AG04450 (cell line): ENCODE measurements at regions of chr5 and their contacts with region 1.

Region 1: DNA sequence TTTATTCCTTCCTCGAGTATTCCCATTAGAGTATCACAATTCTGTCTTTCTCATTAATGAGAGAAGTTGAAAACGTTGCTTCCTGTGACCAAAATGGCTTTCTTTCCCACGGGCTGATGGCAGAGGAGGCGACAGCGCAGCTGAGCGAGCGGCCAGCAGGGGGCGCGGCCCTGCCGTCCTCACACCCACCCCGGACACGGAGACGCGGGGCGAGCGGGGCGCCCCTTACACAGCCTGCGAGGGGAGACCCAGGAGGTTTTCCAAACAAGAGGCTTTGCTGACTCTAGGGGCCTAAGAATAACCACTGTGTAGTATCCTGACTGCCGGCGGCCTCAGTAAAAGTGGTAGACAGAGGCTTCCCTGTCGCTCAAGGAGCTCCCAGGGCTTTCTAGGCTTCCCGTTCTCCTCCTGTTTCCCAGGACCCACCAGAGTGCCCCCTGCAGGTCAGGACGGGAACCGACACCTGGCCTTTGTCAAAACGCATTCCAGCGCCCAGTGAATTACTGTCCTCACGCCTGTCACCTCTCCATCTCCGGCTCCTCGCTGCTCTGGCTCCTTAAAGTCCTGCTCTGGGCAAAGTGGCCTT is 27.3 kb upstream of the FGF1 start:
- DNase-seq: peak; percentile 54
- H3K4me3 ChIP-seq: peak overlapping the region; percentile 72
- H3K27ac ChIP-seq: no peak overlapping the region
- H3K27me3 ChIP-seq: peaks cover 2% of the 10 kb centered on the region
- CTCF ChIP-seq: peak; percentile 79

Region 2: GRCh38 chr5:141691867-141692532 is 1021.2 kb before region 1 on chr5:
- CTCF ChIA-PET with region 1: no interaction called
- POLR2A ChIA-PET with region 1: no interaction called
- DNase-seq: peak; percentile 38
- H3K4me3 ChIP-seq: peak overlapping the region; percentile 59
- H3K27ac ChIP-seq: no peak overlapping the region
- H3K27me3 ChIP-seq: peaks cover 38% of the 10 kb centered on the region
- CTCF ChIP-seq: peak; percentile 97

Region 3: GRCh38 chr5:142644640-142645361 is 68.4 kb before region 1 on chr5:
- CTCF ChIA-PET with region 1: interaction called, 22 read pairs
- POLR2A ChIA-PET with region 1: no interaction called
- DNase-seq: peak; percentile 96
- H3K4me3 ChIP-seq: peak overlapping the region; percentile 49
- H3K27ac ChIP-seq: peak overlapping the region; percentile 97
- H3K27me3 ChIP-seq: no peaks in the 10 kb centered on the region
- CTCF ChIP-seq: no peak

Region 4: GRCh38 chr5:142685418-142686209 is 27.6 kb before region 1 on chr5 and contains the start of gene FGF1:
- CTCF ChIA-PET with region 1: interaction called, 20 read pairs
- POLR2A ChIA-PET with region 1: no interaction called
- DNase-seq: no peak
- H3K4me3 ChIP-seq: no peak within 1 kb of the TSS
- H3K27ac ChIP-seq: no peak within 1 kb of the TSS
- H3K27me3 ChIP-seq: no peaks in the 10 kb centered on the region
- CTCF ChIP-seq: no peak
- polyA plus RNA-seq, gene FGF1: 5.9 and 6.3 TPM in 2 replicates

Region 5: GRCh38 chr5:142769741-142770631 is 56.8 kb after region 1 on chr5 and contains the start of gene ARHGAP26:
- CTCF ChIA-PET with region 1: interaction called, 20 read pairs
- POLR2A ChIA-PET with region 1: no interaction called
- DNase-seq: peak; percentile 77
- H3K4me3 ChIP-seq: peak within 1 kb of the TSS; percentile 92
- H3K27ac ChIP-seq: no peak within 1 kb of the TSS
- H3K27me3 ChIP-seq: peaks cover 38% of the 10 kb centered on the region
- CTCF ChIP-seq: peak; percentile 34
- polyA plus RNA-seq, gene ARHGAP26: 0.56 and 0.77 TPM in 2 replicates

Region 6: DNA sequence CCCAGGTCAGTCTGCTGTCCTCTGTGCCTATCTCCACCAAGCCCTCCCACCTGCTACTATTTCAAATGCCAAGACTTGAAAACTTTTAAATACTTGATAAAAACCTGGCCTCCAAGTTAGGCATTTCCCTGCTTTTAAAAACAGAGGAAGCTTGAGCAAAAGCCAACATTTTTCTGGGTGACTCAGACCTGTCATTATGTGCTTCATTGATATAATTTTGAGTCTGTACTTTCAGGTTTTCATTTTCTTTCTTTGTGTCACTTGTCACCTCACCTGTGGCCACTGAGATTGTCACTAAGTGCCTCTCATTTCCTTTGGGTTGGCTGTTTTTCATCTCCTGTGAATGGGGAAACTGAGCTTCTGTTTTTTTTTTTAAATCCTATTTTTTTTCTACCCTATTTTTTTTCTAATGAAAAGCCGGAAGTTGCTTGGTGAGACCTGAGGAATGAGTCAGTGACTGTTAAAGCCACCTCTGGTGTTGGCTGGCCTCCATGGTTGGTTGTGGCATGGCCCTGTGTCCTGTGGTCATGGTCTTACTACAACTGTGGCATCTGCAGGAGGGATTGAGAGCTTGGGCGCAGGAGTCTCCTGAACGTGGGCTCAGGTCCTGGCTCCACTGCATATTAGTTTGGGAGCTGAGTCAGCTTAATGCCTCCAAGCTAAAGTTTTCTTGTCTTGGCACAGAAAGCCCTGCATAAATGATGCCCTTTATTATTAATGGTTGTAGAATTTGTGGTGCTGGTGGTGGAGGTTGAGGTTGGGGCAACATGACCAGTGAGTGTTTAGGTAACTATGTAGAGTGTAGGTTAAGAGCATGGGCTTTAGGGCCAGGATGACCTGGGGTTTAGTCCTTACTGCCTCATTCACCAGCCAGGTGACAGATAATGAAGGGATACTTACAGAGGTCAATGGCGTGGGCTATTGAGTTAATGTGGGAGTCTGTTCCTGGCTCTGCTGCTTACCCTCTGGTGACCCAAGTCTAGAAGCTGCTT is 113.8 kb after region 1 on chr5:
- CTCF ChIA-PET with region 1: interaction called, 10 read pairs
- POLR2A ChIA-PET with region 1: no interaction called
- DNase-seq: no peak
- H3K4me3 ChIP-seq: no peak overlapping the region
- H3K27ac ChIP-seq: peak overlapping the region; percentile 58
- H3K27me3 ChIP-seq: no peaks in the 10 kb centered on the region
- CTCF ChIP-seq: no peak

Region 7: GRCh38 chr5:142874537-142874936 is 161.3 kb after region 1 on chr5:
- CTCF ChIA-PET with region 1: interaction called, 1,004 read pairs
- POLR2A ChIA-PET with region 1: no interaction called
- DNase-seq: no peak
- H3K4me3 ChIP-seq: no peak overlapping the region
- H3K27ac ChIP-seq: no peak overlapping the region
- H3K27me3 ChIP-seq: peaks cover 24% of the 10 kb centered on the region
- CTCF ChIP-seq: no peak

Region 8: GRCh38 chr5:142915813-142916424 is 202.7 kb after region 1 on chr5:
- CTCF ChIA-PET with region 1: interaction called, 11 read pairs
- POLR2A ChIA-PET with region 1: no interaction called
- DNase-seq: no peak
- H3K4me3 ChIP-seq: no peak overlapping the region
- H3K27ac ChIP-seq: no peak overlapping the region
- H3K27me3 ChIP-seq: no peaks in the 10 kb centered on the region
- CTCF ChIP-seq: peak; percentile 76

Region 9: DNA sequence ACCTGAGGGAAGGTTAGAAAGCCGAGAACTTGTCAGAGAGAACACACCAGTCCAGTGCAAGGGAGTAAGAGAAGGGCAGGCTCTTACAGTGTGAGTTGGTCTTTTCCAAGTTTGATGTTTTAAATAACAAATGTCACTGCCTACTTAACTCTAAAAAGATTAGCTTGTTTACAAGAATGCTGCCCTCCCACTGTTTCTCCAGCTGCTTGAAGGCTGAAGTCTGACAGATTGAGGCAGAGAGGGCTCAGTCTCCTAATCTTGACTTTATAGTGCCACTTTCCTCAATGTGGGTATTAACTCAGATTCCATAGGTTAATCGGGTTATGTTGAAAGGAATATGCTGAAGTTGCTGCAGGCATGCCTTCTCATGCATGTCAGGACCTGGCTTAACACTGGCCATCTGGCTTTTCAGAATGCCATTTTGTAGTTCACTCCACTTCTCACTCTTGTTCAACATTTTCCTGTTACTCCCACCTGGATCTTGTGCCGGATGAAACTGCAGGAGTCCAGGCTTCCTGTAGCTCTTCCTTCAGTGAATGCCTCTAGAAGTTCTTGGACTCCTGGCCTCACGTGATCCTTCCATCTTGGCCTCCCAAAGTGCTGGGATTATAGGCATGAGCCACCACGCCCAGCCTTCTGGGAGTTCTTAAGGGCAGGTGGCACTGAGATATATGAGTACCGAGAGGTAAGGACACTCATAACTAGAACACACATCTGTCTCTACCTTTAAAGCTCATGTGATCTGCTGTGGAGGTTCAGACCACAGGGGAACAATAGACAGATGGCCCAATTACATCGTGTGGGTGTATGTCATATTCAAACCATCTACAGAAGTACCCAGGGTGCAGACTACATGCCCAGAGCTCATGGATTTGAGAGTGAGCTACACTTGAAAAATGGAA is 306.7 kb after region 1 on chr5:
- CTCF ChIA-PET with region 1: no interaction called
- POLR2A ChIA-PET with region 1: no interaction called
- DNase-seq: no peak
- H3K4me3 ChIP-seq: no peak overlapping the region
- H3K27ac ChIP-seq: no peak overlapping the region
- H3K27me3 ChIP-seq: no peaks in the 10 kb centered on the region
- CTCF ChIP-seq: no peak

Region 10: DNA sequence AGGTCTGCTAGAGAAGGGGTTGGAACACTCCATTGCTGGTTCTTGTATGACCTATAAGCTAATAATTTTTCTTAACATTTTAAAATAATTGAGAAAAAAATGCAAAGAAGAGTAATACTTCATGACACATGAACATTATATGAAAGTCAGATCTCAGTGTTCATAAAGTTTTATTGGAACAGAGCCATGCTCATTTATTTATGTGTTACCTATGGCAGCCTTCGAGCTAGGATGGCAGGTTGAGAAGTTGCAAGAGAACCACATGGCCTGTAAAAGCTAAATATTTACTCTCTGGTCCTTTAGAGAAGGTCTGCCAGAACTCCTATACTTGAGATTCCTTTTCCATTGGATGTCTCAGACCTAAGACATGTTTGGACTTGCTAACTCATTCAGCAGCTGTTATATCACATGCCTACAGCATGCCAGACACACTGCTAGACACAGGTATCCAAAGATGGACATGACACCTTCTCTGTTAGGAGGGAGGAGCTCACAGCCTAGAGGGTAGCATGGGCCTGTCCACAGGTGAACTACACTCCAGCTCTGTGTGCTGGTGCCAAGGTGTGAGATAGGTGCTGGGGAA is 361.3 kb after region 1 on chr5:
- CTCF ChIA-PET with region 1: no interaction called
- POLR2A ChIA-PET with region 1: no interaction called
- DNase-seq: no peak
- H3K4me3 ChIP-seq: no peak overlapping the region
- H3K27ac ChIP-seq: peak overlapping the region; percentile 60
- H3K27me3 ChIP-seq: no peaks in the 10 kb centered on the region
- CTCF ChIP-seq: no peak